Heart right ventricle (tissue), 16 donors: ENCODE measurements at regions of chr11 and their contacts with region 1.

Region 1: DNA sequence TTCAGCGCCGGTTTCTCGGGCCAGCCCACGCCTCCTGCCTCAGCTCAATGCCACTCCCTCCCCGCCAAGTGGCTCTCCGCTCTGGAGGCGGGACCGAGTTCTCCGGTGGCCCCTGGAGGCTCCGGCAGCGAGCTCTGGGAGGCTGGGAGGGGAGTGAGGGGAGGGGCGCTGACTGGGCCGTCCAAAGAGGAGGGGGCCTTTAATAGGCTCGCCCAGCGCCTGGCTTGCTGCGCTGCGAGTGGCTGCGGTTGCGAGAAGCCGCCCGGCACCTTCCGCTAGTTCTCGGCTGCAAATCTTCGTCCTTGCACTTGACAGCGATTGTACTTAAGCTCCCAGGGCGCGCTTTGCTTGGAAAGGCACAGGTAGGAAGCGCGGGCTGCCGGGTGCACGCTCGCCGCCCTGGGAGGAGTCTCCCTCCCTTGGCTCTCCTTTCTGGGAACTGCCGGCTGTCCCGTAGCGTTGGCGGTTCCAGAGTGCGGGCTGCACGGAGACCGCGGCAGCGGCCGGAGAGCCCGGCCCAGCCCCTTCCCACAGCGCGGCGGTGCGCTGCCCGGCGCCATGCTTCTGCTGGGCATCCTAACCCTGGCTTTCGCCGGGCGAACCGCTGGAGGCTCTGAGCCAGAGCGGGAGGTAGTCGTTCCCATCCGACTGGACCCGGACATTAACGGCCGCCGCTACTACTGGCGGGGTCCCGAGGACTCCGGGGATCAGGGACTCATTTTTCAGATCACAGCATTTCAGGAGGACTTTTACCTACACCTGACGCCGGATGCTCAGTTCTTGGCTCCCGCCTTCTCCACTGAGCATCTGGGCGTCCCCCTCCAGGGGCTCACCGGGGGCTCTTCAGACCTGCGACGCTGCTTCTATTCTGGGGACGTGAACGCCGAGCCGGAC is at the start of gene ADAMTS15:
- DNase-seq: peak; percentile 85 to 91
- ATAC-seq: peak; percentile 76 to 86 (median 83)
- H3K4me3 ChIP-seq: peak within 1 kb of the TSS; percentile 69 to 98 (median 80)
- H3K27ac ChIP-seq: peak within 1 kb of the TSS; percentile 41 to 91 (median 82)
- H3K4me1 ChIP-seq: peaks cover 8 to 61% (median 50%) of the 10 kb centered on the region in 9 donors
- H3K27me3 ChIP-seq: peaks cover 0 to 40% (median 0%) of the 10 kb centered on the region in 7 donors
- CTCF ChIP-seq: no peak
- total RNA-seq, gene ADAMTS15: 7.7 to 49.4 (median 14.2) TPM

Region 2: GRCh38 chr11:130527636-130528297 is 79.1 kb after region 1 on chr11:
- intact Hi-C with region 1: loop called in 7 of 10 experiments (anchors 2 to 5 kb)
- DNase-seq: peak; percentile 31 to 55
- ATAC-seq: peak; percentile 40 to 78 (median 69)
- H3K4me3 ChIP-seq: no peak overlapping the region
- H3K27ac ChIP-seq: peak overlapping the region in 8 of 10 donors; percentile 36 to 76 (median 51)
- H3K4me1 ChIP-seq: peaks cover 27 to 45% (median 36%) of the 10 kb centered on the region in 9 donors
- H3K27me3 ChIP-seq: no peaks in the 10 kb centered on the region
- CTCF ChIP-seq: no peak

Region 3: GRCh38 chr11:130653838-130654636 is 205.4 kb after region 1 on chr11:
- intact Hi-C with region 1: loop called in 4 of 10 experiments (anchors 2 to 5 kb)
- DNase-seq: peak; percentile 84 to 85
- ATAC-seq: peak; percentile 94 to 98 (median 96)
- H3K4me3 ChIP-seq: no peak overlapping the region
- H3K27ac ChIP-seq: peak overlapping the region; percentile 1 to 75 (median 68)
- H3K4me1 ChIP-seq: peaks cover 7 to 50% (median 34%) of the 10 kb centered on the region in 9 donors
- H3K27me3 ChIP-seq: no peaks in the 10 kb centered on the region
- CTCF ChIP-seq: no peak

Region 4: DNA sequence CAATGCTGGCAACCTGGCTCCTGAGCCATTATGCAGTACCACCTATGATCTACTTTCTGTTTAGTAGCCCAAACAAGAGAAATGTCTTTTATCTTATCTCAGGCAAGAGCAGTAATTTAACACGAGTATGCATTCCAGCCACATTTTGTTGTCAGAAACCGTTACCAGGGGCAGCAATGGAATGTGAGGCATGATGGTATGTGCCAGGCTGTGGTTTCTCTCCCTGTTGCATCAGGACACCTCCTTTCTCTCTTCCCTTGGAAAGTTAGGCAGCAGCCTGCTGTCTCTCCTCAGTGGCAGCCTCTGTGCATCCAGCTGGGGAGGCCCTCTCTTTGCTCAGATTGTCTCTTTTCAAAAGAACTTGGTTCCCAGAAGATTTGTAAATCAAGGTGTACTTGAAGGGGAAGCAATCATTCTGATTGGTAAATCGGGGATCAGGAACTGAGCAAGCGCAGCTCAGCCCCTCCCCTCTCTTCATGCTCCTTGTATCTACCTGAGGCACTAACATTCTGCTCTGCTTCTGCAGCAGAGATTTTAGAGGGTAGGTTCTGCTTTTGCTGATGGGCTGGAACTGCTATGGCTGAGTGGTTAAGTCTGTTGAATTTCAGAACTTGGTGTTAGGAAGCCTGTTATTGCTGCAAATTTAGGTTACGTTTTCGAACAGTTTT is 229.0 kb after region 1 on chr11:
- intact Hi-C with region 1: loop called in 5 of 10 experiments (anchors 2 to 10 kb)
- DNase-seq: peak in 1 of 2 donors; percentile 46
- ATAC-seq: peak in 7 of 8 donors; percentile 27 to 82 (median 67)
- H3K4me3 ChIP-seq: no peak overlapping the region
- H3K27ac ChIP-seq: peak overlapping the region in 9 of 10 donors; percentile 75 to 89 (median 83)
- H3K4me1 ChIP-seq: peaks cover 4 to 48% (median 39%) of the 10 kb centered on the region in 9 donors
- H3K27me3 ChIP-seq: no peaks in the 10 kb centered on the region
- CTCF ChIP-seq: no peak

Region 5: GRCh38 chr11:130782361-130783221 is 333.9 kb after region 1 on chr11:
- intact Hi-C with region 1: loop called in 1 of 10 experiments (anchors 5 kb)
- DNase-seq: no peak
- ATAC-seq: peak; percentile 35 to 65 (median 52)
- H3K4me3 ChIP-seq: no peak overlapping the region
- H3K27ac ChIP-seq: peak overlapping the region in 9 of 10 donors; percentile 9 to 76 (median 67)
- H3K4me1 ChIP-seq: peaks cover 7 to 37% (median 25%) of the 10 kb centered on the region in 9 donors
- H3K27me3 ChIP-seq: no peaks in the 10 kb centered on the region
- CTCF ChIP-seq: no peak